Activated CD4-positive, alpha-beta T cell treated with anti-CD3 and anti-CD28 coated beads for 36 hours (primary cell): ENCODE measurements at regions of chr2 and their contacts with region 1.

Region 1: GRCh38 chr2:85327822-85328617 is at the start of gene TGOLN2:
- DNase-seq: peak; percentile 98
- ATAC-seq: peak; percentile 91
- H3K4me3 Mint-ChIP-seq: peak within 1 kb of the TSS; percentile 86
- H3K27ac Mint-ChIP-seq: peak within 1 kb of the TSS; percentile 99
- H3K4me1 Mint-ChIP-seq: peaks cover 37% of the 10 kb centered on the region
- H3K27me3 Mint-ChIP-seq: no peaks in the 10 kb centered on the region
- total RNA-seq, gene TGOLN2: 84.0 to 90.4 TPM

Region 2: GRCh38 chr2:84970868-84971509 is 357.0 kb before region 1 on chr2 and contains the start of gene KCMF1:
- CTCF ChIA-PET with region 1: no interaction called
- POLR2A ChIA-PET with region 1: no interaction called
- intact Hi-C with region 1: loop called in 1 of 2 experiments (anchors 2 kb)
- DNase-seq: peak; percentile 83
- ATAC-seq: peak; percentile 69
- H3K4me3 Mint-ChIP-seq: peak within 1 kb of the TSS; percentile 98
- H3K27ac Mint-ChIP-seq: peak within 1 kb of the TSS; percentile 100
- H3K4me1 Mint-ChIP-seq: peaks cover 38% of the 10 kb centered on the region
- H3K27me3 Mint-ChIP-seq: no peaks in the 10 kb centered on the region
- total RNA-seq, gene KCMF1: 78.1 to 98.5 TPM

Region 3: GRCh38 chr2:85273738-85274731 is 54.0 kb before region 1 on chr2:
- CTCF ChIA-PET with region 1: no interaction called
- POLR2A ChIA-PET with region 1: no interaction called
- intact Hi-C with region 1: no loop called
- DNase-seq: peak; percentile 29
- ATAC-seq: no peak
- H3K4me3 Mint-ChIP-seq: no peak overlapping the region
- H3K27ac Mint-ChIP-seq: no peak overlapping the region
- H3K4me1 Mint-ChIP-seq: no peaks in the 10 kb centered on the region
- H3K27me3 Mint-ChIP-seq: no peaks in the 10 kb centered on the region

Region 4: GRCh38 chr2:85354286-85355072 is 26.5 kb after region 1 on chr2 and contains the starts of genes ELMOD3 and RETSAT:
- CTCF ChIA-PET with region 1: interaction called, 3 read pairs
- POLR2A ChIA-PET with region 1: interaction called, 20 read pairs
- intact Hi-C with region 1: loop called (anchors 1 kb)
- DNase-seq: peak; percentile 98
- ATAC-seq: peak; percentile 100
- H3K4me3 Mint-ChIP-seq: peak within 1 kb of the TSS; percentile 89
- H3K27ac Mint-ChIP-seq: peak within 1 kb of the TSS; percentile 99
- H3K4me1 Mint-ChIP-seq: peaks cover 34% of the 10 kb centered on the region
- H3K27me3 Mint-ChIP-seq: no peaks in the 10 kb centered on the region
- total RNA-seq, gene ELMOD3: 11.2 to 12.9 TPM
- total RNA-seq, gene RETSAT: 18.1 to 18.7 TPM

Region 5: DNA sequence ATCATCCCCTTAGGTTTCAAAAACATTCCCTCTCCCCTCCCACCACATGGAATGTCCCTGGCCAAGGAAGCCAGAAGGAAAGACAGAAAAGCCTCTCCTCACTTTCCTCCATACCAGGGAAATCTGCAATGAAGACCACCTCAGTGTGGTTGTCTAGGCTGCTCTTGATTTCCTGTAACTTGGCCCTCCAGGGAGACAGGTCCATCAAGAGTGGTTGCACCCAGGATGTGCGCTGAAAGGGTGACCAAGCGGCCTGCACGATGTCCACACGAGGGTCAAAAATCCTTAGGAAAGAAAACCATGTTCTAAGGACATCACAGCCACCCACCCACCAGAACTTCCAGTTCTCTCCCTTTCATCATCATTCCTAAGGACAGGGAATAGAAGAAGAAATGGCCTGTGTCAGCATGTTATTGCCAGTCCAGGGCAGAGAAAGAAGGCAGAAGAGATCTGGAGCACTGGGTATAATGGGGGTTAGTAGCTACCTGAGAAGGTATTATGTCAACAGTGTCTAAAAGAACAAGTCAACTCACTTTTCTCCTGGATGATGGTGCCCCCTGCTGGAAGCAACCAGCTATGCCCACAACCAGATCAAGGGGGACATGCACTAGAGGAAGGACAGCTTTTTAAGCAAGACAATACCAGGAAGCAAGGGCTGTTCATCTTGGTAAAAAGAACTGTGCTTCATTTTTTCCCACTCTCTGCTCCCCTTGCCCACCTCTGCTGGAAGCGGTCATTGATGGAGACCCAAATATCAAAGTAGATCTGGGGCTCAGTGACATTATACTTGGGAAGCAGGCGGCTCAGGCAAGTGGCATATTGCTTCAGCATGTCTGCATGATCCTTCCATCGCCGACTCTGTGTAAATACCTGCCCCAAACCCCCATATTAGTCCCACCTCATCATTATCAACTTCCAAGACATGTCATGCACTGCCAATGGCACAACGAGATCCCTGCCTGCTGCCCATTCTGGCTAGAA is 224.0 kb after region 1 on chr2:
- CTCF ChIA-PET with region 1: interaction called, 5 read pairs
- POLR2A ChIA-PET with region 1: no interaction called
- intact Hi-C with region 1: loop called (anchors 2 to 5 kb)
- DNase-seq: peak; percentile 92
- ATAC-seq: peak; percentile 88
- H3K4me3 Mint-ChIP-seq: no peak overlapping the region
- H3K27ac Mint-ChIP-seq: no peak overlapping the region
- H3K4me1 Mint-ChIP-seq: peaks cover 2% of the 10 kb centered on the region
- H3K27me3 Mint-ChIP-seq: no peaks in the 10 kb centered on the region

Region 6: GRCh38 chr2:85570297-85570696 is 242.3 kb after region 1 on chr2:
- CTCF ChIA-PET with region 1: no interaction called
- POLR2A ChIA-PET with region 1: no interaction called
- intact Hi-C with region 1: no loop called
- DNase-seq: no peak
- ATAC-seq: no peak
- H3K4me3 Mint-ChIP-seq: no peak overlapping the region
- H3K27ac Mint-ChIP-seq: no peak overlapping the region
- H3K4me1 Mint-ChIP-seq: no peaks in the 10 kb centered on the region
- H3K27me3 Mint-ChIP-seq: no peaks in the 10 kb centered on the region

Region 7: DNA sequence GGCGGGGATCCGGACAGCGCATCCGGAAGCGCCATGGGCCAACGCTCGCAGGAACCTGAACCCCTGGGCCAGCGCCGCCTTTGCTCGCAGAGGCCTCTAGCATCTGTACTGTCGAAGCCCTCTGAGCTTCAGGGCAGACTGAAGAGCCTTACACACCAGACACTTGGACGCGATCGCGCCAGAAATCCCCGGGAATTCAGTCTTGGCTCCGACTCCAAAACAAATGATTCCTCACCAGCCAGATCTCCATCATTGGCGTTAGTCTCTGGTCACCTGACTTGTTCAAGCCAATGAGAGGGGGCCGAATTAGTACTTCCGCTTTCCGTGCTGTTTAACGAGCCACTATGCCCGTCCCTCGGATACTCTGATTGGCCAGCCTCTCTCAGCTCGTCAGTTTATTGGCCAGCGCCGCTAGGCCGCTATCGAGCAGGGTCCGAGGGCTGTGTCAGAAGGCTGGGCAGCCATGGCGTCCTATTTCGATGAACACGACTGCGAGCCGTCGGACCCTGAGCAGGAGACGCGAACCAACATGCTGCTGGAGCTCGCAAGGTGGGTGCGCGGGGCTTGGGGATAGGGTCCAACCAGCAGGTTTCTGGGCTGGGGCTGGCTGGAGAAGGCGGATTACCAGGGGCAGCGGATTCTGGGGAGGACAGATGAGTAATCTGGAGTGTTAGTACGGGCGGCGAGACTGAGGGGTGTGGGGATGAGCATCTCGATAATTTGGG is 267.4 kb after region 1 on chr2 and contains the start of gene RNF181:
- CTCF ChIA-PET with region 1: no interaction called
- POLR2A ChIA-PET with region 1: no interaction called
- intact Hi-C with region 1: loop called in 1 of 2 experiments (anchors 1 kb)
- DNase-seq: peak; percentile 94
- ATAC-seq: peak; percentile 100
- H3K4me3 Mint-ChIP-seq: peak within 1 kb of the TSS; percentile 100
- H3K27ac Mint-ChIP-seq: peak within 1 kb of the TSS; percentile 99
- H3K4me1 Mint-ChIP-seq: peaks cover 28% of the 10 kb centered on the region
- H3K27me3 Mint-ChIP-seq: no peaks in the 10 kb centered on the region
- total RNA-seq, gene RNF181: 113 to 140 TPM

Region 8: GRCh38 chr2:86105252-86105968 is 777.4 kb after region 1 on chr2 and contains the start of gene POLR1A:
- CTCF ChIA-PET with region 1: no interaction called
- POLR2A ChIA-PET with region 1: no interaction called
- intact Hi-C with region 1: loop called in 1 of 2 experiments (anchors 1 kb)
- DNase-seq: peak; percentile 90
- ATAC-seq: peak; percentile 75
- H3K4me3 Mint-ChIP-seq: peak within 1 kb of the TSS; percentile 88
- H3K27ac Mint-ChIP-seq: peak within 1 kb of the TSS; percentile 99
- H3K4me1 Mint-ChIP-seq: peaks cover 54% of the 10 kb centered on the region
- H3K27me3 Mint-ChIP-seq: no peaks in the 10 kb centered on the region
- total RNA-seq, gene POLR1A: 38.1 to 45.5 TPM

Region 9: GRCh38 chr2:86440631-86441391 is 1112.8 kb after region 1 on chr2 and contains the start of gene KDM3A:
- CTCF ChIA-PET with region 1: no interaction called
- POLR2A ChIA-PET with region 1: interaction called, 5 read pairs
- intact Hi-C with region 1: loop called in 1 of 2 experiments (anchors 5 kb)
- DNase-seq: peak; percentile 100
- ATAC-seq: peak; percentile 88
- H3K4me3 Mint-ChIP-seq: peak within 1 kb of the TSS; percentile 90
- H3K27ac Mint-ChIP-seq: peak within 1 kb of the TSS; percentile 99
- H3K4me1 Mint-ChIP-seq: peaks cover 37% of the 10 kb centered on the region
- H3K27me3 Mint-ChIP-seq: no peaks in the 10 kb centered on the region
- total RNA-seq, gene KDM3A: 68.9 to 82.9 TPM